Left colon (tissue), 2 donors: ENCODE measurements at regions of chr12 and their contacts with region 1.

Region 1: DNA sequence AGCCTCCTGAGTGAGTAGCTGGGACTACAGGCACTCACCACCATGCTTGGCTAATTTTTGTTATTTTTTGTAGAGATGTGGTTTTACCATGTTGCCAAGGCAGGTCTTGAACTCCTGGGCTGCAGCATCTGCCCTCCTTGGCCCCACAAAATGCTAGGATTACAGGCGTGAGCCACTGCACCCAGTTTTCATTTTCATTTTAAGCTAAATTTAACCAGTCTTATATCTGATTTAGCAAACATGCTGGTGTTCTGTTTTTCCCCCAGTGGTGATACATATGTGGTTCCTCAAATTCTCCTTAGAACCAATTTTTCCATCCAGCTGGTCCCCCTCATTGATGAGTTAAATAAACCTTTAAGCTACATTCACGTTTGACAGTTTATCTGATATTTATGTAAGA is 43.8 kb upstream of the BICD1 start:
- DNase-seq: no peak
- ATAC-seq: no peak

Region 2: GRCh38 chr12:32312049-32312670 is 249.3 kb after region 1 on chr12:
- intact Hi-C with region 1: loop called in 1 of 2 experiments (anchors 5 kb)
- DNase-seq: no peak
- ATAC-seq: peak; percentile 72